Posterior vena cava (tissue), 2 donors: ENCODE measurements at regions of chr3 and their contacts with region 1.

Region 1: GRCh38 chr3:69120879-69121464 is 1.4 kb downstream of the LMOD3 start:
- DNase-seq: no peak

Region 2: DNA sequence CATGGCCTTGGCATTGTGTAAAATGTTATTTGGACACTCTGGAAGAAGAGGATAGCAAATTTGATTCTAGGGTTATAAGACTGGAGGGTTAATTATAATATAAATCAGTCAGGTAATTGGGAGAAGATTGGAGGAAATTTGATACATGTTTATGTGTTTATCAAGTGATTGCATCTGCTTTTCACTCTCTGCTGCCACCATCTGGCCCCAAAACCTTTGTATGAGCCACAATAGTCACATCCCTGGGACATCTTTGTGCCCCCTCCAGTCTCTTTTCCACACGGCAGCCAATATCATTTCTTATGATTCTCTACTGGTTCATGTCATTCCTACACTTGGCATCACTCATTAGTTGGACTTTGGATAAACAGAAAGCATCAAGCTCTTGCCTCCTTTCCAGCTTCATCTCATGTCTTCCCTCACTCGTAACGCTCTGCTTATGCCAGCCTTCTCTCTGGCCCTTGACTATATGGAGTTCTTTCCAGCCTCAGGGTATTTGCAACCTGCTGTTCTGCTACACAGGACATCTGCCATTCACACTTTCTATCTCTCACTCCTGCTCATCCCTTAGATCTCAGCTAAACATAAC is 864.2 kb before region 1 on chr3:
- intact Hi-C with region 1: no loop called
- DNase-seq: no peak

Region 3: DNA sequence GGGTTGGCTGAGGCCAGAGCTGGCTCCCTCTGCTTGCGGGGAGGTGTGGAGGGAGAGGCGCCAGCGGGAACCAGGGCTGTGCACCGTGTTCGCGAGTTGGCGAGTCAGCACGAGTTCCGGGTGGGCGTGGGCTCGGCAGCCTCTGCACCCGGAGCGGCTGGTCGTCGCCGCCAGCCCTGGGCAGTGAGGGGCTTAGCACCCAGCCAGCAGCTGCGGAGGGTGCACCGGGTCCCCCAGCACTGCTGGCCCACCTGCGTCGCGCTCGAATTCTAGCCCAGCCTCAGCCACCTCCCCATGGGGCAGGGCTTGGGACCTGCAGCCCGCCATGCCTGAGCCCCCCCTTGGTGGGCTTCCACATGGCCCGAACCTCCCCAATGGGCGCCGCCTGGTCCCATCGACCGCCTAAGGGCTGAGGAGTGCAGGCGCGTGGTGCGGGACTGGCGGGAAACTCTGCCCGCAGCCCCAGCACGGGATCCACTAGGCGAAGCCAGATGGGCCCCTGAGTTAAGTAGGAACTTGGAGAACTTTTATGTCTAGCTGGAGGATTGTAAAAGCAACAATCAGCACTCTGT is 139.3 kb after region 1 on chr3:
- intact Hi-C with region 1: no loop called
- DNase-seq: no peak

Region 4: GRCh38 chr3:69665026-69665737 is 544.2 kb after region 1 on chr3:
- intact Hi-C with region 1: loop called in 1 of 2 experiments (anchors 10 kb)
- DNase-seq: no peak